ENCODE measurements at regions of chr1 and their contacts with region 1.

Region 1: DNA sequence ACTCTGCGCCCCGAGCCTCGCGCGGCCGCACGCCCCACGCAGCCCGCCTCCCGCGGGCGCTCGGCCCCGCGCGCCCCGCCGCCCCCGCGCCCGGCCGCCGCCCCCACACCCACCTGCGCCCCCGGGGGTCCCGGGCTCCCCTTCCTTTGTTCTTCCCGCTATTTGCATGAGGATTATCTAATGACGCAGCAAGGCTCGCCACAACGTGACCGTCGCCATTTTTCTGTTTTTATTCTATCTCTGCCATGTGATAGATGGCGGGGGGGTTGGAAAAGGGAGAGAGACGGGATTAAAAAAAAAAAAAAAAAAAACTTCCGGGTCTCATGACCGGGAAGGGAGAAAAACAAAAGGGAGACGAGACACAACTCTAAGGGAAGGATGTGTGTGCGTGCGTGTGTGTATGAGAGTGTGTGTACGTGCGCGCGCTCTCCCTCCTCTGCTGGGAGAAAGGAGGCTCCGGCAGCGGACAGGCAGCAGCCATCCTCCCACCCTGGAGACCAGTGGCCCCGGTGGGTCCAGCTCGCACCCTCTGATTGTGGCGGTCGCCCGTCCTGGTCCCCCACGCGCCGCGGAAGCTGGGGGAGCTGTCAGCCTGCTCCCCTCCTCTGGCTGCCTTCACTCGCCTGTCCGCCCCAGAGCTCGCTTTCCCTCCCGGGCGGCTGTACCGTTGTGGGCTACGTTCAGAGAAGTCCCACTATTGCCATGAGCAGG is 80.4 kb upstream of the AK4 start:
- DNase-seq: peak; percentile 84
- ATAC-seq: peak; percentile 11
- H3K4me3 ChIP-seq: peak overlapping the region; percentile 65 to 93 (median 89)
- H3K4me3 Mint-ChIP-seq: peak overlapping the region; percentile 94
- H3K27ac ChIP-seq: peak overlapping the region; percentile 93 to 98
- H3K27ac Mint-ChIP-seq: peak overlapping the region; percentile 95
- H3K4me1 ChIP-seq: peaks cover 21 to 25% of the 10 kb centered on the region in 2 donors
- H3K4me1 Mint-ChIP-seq: peaks cover 46% of the 10 kb centered on the region
- H3K27me3 ChIP-seq: no peaks in the 10 kb centered on the region
- H3K27me3 Mint-ChIP-seq: no peaks in the 10 kb centered on the region
- CTCF ChIP-seq: no peak

Region 2: GRCh38 chr1:63593303-63593885 is 1474.3 kb before region 1 on chr1 and contains the start of gene PGM1:
- CTCF ChIA-PET with region 1: no interaction called
- POLR2A ChIA-PET with region 1: no interaction called
- intact Hi-C with region 1: loop called (anchors 10 kb)
- DNase-seq: peak; percentile 81
- ATAC-seq: peak; percentile 81
- H3K4me3 ChIP-seq: peak within 1 kb of the TSS; percentile 32 to 92 (median 80)
- H3K4me3 Mint-ChIP-seq: peak within 1 kb of the TSS; percentile 98
- H3K27ac ChIP-seq: peak within 1 kb of the TSS; percentile 78 to 88
- H3K27ac Mint-ChIP-seq: peak within 1 kb of the TSS; percentile 98
- H3K4me1 ChIP-seq: peaks cover 6 to 9% of the 10 kb centered on the region in 2 donors
- H3K4me1 Mint-ChIP-seq: peaks cover 13% of the 10 kb centered on the region
- H3K27me3 ChIP-seq: no peaks in the 10 kb centered on the region
- H3K27me3 Mint-ChIP-seq: no peaks in the 10 kb centered on the region
- CTCF ChIP-seq: no peak
- total RNA-seq, gene PGM1: 13.2 and 17.3 TPM in 2 replicates

Region 3: DNA sequence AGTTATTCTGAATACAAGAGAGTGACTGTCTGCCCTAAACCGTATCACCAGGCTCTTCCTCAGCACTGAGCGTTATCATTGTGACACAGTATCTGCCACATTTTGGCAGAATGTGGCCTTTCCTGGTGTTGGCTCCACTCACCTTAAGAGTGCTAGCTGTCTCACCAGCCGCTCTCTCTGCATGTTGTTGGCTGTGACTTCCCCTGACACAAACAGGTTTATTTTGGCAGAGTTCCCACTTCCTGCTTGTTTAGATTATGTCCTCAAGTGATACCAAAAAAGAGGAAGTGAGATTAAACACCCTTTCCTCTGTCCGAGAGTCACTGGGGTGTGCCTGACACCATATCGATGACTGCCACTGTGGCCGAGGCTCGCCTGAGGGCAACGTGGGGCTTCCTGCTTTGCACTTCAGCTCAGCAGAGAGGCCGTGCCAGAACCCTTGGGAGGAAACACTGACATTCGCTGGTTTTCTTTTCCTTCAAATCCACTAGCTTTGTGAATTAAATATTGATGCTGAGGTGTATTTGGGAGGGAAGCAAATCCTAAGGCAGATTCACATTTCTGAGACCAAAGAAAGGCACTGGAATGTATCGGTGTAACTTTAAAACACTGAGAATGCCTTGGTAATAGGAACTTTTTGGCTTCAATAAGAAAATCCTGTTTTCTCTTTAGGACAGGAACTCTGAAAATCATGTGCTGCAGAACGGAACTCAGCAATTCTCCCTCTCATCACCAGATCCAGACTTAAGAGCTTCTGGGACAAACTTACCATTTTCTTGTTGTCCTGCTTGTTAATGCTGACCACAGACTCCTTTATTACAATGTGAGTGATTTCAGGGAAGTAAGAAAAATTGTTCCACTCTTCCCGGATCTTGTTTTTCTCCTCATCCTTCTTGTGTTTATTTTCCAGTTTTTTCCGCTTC is 203.4 kb before region 1 on chr1:
- CTCF ChIA-PET with region 1: interaction called, 6 read pairs
- POLR2A ChIA-PET with region 1: no interaction called
- intact Hi-C with region 1: loop called (anchors 2 kb)
- DNase-seq: peak; percentile 92
- ATAC-seq: peak; percentile 95
- H3K4me3 ChIP-seq: peak overlapping the region in 2 of 5 experiments; percentile 2 to 5
- H3K4me3 Mint-ChIP-seq: peak overlapping the region; percentile 77
- H3K27ac ChIP-seq: peak overlapping the region; percentile 74 to 79
- H3K27ac Mint-ChIP-seq: peak overlapping the region; percentile 90
- H3K4me1 ChIP-seq: peaks cover 63 to 66% of the 10 kb centered on the region in 2 donors
- H3K4me1 Mint-ChIP-seq: peaks cover 75% of the 10 kb centered on the region
- H3K27me3 ChIP-seq: no peaks in the 10 kb centered on the region
- H3K27me3 Mint-ChIP-seq: no peaks in the 10 kb centered on the region
- CTCF ChIP-seq: no peak

Region 4: GRCh38 chr1:64966158-64966971 is 101.3 kb before region 1 on chr1 and contains the start of gene JAK1:
- CTCF ChIA-PET with region 1: interaction called, 3 read pairs
- POLR2A ChIA-PET with region 1: no interaction called
- intact Hi-C with region 1: loop called (anchors 1 kb)
- DNase-seq: peak; percentile 92
- ATAC-seq: peak; percentile 83
- H3K4me3 ChIP-seq: peak within 1 kb of the TSS; percentile 73 to 100 (median 91)
- H3K4me3 Mint-ChIP-seq: peak within 1 kb of the TSS; percentile 93
- H3K27ac ChIP-seq: peak within 1 kb of the TSS; percentile 79 to 96
- H3K27ac Mint-ChIP-seq: peak within 1 kb of the TSS; percentile 96
- H3K4me1 ChIP-seq: peaks cover 44 to 49% of the 10 kb centered on the region in 2 donors
- H3K4me1 Mint-ChIP-seq: peaks cover 43% of the 10 kb centered on the region
- H3K27me3 ChIP-seq: no peaks in the 10 kb centered on the region
- H3K27me3 Mint-ChIP-seq: no peaks in the 10 kb centered on the region
- CTCF ChIP-seq: no peak
- total RNA-seq, gene JAK1: 244 and 260 TPM in 2 replicates

Region 5: DNA sequence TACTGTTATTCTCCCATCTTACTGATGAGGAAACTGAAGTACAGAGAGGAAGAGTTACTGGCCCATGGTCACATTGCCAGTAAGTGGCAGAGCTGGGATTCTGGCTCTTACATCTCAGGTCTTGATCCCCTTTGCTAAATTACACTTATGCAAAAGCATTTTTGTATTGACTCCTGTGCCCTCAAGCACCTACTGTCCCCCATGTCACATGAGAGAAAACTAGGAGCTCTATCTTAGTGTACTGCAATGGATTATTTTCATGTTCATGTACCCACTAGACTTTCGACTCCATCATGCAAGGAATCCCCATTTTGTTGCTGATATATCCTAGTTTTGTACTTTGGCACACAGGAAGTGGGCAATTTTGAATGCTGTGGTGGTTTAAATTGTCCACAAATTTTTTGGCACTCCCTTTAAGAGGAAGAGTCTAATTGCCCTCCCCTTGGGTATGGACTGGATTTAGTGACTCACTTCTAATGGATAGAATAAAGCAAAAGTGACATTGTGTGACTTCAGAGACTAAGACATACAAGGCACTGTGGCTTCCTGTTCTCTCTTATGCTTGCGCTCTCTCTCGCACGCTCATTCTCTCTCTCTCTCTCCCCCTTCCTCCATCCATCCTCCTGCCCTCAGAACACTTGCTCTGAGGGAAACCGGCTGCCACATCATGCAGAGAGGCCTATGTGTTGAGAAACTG is 57.8 kb before region 1 on chr1:
- CTCF ChIA-PET with region 1: no interaction called
- POLR2A ChIA-PET with region 1: no interaction called
- intact Hi-C with region 1: no loop called
- DNase-seq: no peak
- ATAC-seq: no peak
- H3K4me3 ChIP-seq: no peak overlapping the region
- H3K4me3 Mint-ChIP-seq: no peak overlapping the region
- H3K27ac ChIP-seq: no peak overlapping the region
- H3K27ac Mint-ChIP-seq: no peak overlapping the region
- H3K4me1 ChIP-seq: peaks cover 14 to 23% of the 10 kb centered on the region in 2 donors
- H3K4me1 Mint-ChIP-seq: peaks cover 22% of the 10 kb centered on the region
- H3K27me3 ChIP-seq: no peaks in the 10 kb centered on the region
- H3K27me3 Mint-ChIP-seq: no peaks in the 10 kb centered on the region
- CTCF ChIP-seq: no peak

Region 6: GRCh38 chr1:65254319-65255034 is 186.8 kb after region 1 on chr1:
- CTCF ChIA-PET with region 1: no interaction called
- POLR2A ChIA-PET with region 1: no interaction called
- intact Hi-C with region 1: loop called (anchors 5 kb)
- DNase-seq: peak; percentile 87
- ATAC-seq: peak; percentile 97
- H3K4me3 ChIP-seq: peak overlapping the region in 4 of 5 experiments; percentile 41 to 67 (median 62)
- H3K4me3 Mint-ChIP-seq: peak overlapping the region; percentile 91
- H3K27ac ChIP-seq: no peak overlapping the region
- H3K27ac Mint-ChIP-seq: no peak overlapping the region
- H3K4me1 ChIP-seq: peaks cover 16% of the 10 kb centered on the region in 2 donors
- H3K4me1 Mint-ChIP-seq: peaks cover 14% of the 10 kb centered on the region
- H3K27me3 ChIP-seq: peaks cover 0 to 23% (median 7%) of the 10 kb centered on the region in 4 experiments
- H3K27me3 Mint-ChIP-seq: peaks cover 38% of the 10 kb centered on the region
- CTCF ChIP-seq: peak; percentile 19

Region 7: GRCh38 chr1:66402194-66402593 is 1334.5 kb after region 1 on chr1:
- CTCF ChIA-PET with region 1: no interaction called
- POLR2A ChIA-PET with region 1: no interaction called
- intact Hi-C with region 1: loop called (anchors 10 kb)
- DNase-seq: peak; percentile 92
- ATAC-seq: peak; percentile 87
- H3K4me3 ChIP-seq: no peak overlapping the region
- H3K4me3 Mint-ChIP-seq: peak overlapping the region; percentile 77
- H3K27ac ChIP-seq: peak overlapping the region; percentile 37 to 76
- H3K27ac Mint-ChIP-seq: peak overlapping the region; percentile 88
- H3K4me1 ChIP-seq: peaks cover 42 to 45% of the 10 kb centered on the region in 2 donors
- H3K4me1 Mint-ChIP-seq: peaks cover 67% of the 10 kb centered on the region
- H3K27me3 ChIP-seq: no peaks in the 10 kb centered on the region
- H3K27me3 Mint-ChIP-seq: no peaks in the 10 kb centered on the region
- CTCF ChIP-seq: no peak